ENCODE measurements at regions of chr10 and their contacts with region 1.

Region 1: GRCh38 chr10:3043512-3044368 is 23.6 kb upstream of the PFKP start:
- DNase-seq: peak; percentile 74
- ATAC-seq: peak; percentile 87
- H3K4me3 ChIP-seq: no peak overlapping the region
- H3K27ac ChIP-seq: no peak overlapping the region
- H3K4me1 ChIP-seq: peaks cover 11 to 24% of the 10 kb centered on the region in 2 experiments
- H3K27me3 ChIP-seq: no peaks in the 10 kb centered on the region
- CTCF ChIP-seq: peak; percentile 75 to 88 (median 84)
- POLR2A ChIP-seq: no peak
- RAD21 ChIP-seq: peak; percentile 93

Region 2: DNA sequence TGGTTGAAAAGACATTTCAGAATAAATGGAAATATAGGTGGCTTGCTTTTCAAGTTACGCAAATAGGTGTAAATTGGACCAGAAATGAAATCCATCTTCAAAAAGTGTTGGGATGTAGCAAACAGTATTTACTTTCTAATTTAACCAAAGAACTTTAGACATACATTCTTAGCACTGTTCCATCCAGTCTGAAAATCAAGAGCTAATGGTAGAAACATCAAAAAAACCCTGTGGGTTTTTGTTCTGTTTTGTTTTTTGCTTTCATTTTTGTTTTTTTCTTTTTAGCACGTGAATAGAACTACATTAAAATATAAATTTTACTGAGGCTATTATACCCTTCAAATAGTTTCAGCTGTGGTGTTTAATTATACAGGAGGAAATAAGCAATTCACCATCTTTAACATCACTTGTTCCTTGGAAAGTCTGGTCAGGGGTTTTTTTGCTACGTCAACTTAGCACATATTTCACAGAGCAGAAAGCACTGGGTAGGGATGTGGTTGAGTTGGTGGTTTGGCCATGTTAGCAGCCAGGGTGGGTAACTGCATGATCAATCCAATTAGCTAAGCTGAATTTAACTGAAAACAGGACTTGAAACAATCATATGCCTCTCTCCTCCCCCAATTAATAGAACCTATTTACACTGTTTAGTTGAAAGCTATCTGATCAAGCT is 251.8 kb before region 1 on chr10:
- CTCF ChIA-PET with region 1: no interaction called
- POLR2A ChIA-PET with region 1: no interaction called
- RAD21 ChIA-PET with region 1: no interaction called
- intact Hi-C with region 1: no loop called
- DNase-seq: no peak
- ATAC-seq: no peak
- H3K4me3 ChIP-seq: no peak overlapping the region
- H3K27ac ChIP-seq: no peak overlapping the region
- H3K4me1 ChIP-seq: no peaks in the 10 kb centered on the region
- H3K27me3 ChIP-seq: no peaks in the 10 kb centered on the region
- CTCF ChIP-seq: no peak
- POLR2A ChIP-seq: no peak
- RAD21 ChIP-seq: no peak

Region 3: GRCh38 chr10:2839081-2839725 is 204.5 kb before region 1 on chr10:
- CTCF ChIA-PET with region 1: interaction called, 3 read pairs
- POLR2A ChIA-PET with region 1: no interaction called
- RAD21 ChIA-PET with region 1: interaction called, 3 to 4 read pairs
- intact Hi-C with region 1: loop called (anchors 1 kb)
- DNase-seq: no peak
- ATAC-seq: peak; percentile 93
- H3K4me3 ChIP-seq: no peak overlapping the region
- H3K27ac ChIP-seq: no peak overlapping the region
- H3K4me1 ChIP-seq: no peaks in the 10 kb centered on the region
- H3K27me3 ChIP-seq: peaks cover 29% of the 10 kb centered on the region; the same call in 1 of the 2 replicates
- CTCF ChIP-seq: peak; percentile 60 to 83 (median 80); a peak in 5 of 6 replicates
- POLR2A ChIP-seq: no peak
- RAD21 ChIP-seq: peak; percentile 58

Region 4: DNA sequence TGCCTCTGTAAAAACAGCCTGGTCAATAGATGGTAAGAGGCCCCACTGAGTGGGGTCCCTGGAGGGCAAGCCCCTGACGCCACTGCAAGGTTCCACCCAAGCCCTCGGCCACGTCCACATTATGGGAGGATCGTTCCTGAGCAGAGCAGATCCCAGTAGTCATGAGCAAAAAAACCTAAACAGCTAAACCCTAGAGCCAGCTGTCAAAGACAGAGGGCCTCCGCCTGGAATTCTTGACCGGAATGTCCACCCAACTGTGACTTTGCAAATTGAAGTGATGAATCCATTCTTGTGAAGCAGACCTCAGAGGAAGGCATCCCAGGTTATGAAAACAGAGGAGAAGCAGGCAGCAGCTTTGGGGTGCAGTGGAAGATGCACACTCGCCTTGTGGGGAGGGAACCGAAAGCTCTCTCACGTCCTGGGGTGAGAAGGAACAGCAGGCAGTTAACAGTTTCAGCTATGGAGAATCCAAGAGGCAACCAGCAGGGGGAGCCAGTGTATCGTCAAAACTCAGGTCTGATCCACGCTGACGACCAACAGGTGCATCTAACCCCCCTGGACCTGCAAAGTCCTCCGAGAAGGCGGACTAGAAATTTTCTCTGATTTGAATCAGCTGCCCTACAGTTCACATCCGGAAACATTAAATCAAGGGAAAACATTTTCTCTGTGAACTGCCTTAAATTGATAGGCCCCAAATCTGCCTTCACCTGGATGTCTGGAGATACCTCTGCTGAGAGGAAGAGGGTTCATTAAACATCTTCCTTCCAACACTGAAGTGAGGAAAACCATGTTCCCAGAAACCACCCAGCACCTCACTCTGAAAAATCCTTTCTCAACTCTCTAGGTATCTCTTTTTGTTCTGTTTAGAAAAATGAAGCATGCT is 115.5 kb before region 1 on chr10:
- CTCF ChIA-PET with region 1: interaction called, 68 read pairs
- POLR2A ChIA-PET with region 1: interaction called, 3 read pairs
- RAD21 ChIA-PET with region 1: interaction called in 1 of 2 experiments, 8 read pairs
- intact Hi-C with region 1: loop called (anchors 1 kb)
- DNase-seq: peak; percentile 51
- ATAC-seq: peak; percentile 95
- H3K4me3 ChIP-seq: peak overlapping the region; percentile 7 to 17; a peak in 2 of 4 replicates
- H3K27ac ChIP-seq: no peak overlapping the region
- H3K4me1 ChIP-seq: 0 out of 4 replicates have a peak, but pooled peaks cover 0 to 3% of the 10 kb centered on the region in 2 experiments
- H3K27me3 ChIP-seq: peaks cover 31% of the 10 kb centered on the region
- CTCF ChIP-seq: peak; percentile 58 to 85 (median 82); a peak in 5 of 6 replicates
- POLR2A ChIP-seq: no peak
- RAD21 ChIP-seq: peak; percentile 86

Region 5: GRCh38 chr10:2985729-2986232 is 58.0 kb before region 1 on chr10:
- CTCF ChIA-PET with region 1: interaction called, 15 read pairs
- POLR2A ChIA-PET with region 1: no interaction called
- RAD21 ChIA-PET with region 1: no interaction called
- intact Hi-C with region 1: no loop called
- DNase-seq: peak; percentile 73
- ATAC-seq: peak; percentile 96
- H3K4me3 ChIP-seq: peak overlapping the region; percentile 41 to 63
- H3K27ac ChIP-seq: peak overlapping the region; percentile 45
- H3K4me1 ChIP-seq: peaks cover 16 to 32% of the 10 kb centered on the region in 2 experiments
- H3K27me3 ChIP-seq: no peaks in the 10 kb centered on the region
- CTCF ChIP-seq: 0 out of 6 replicates have a peak, but pooled peaks of 1 of the 3 experiments have one; percentile 23
- POLR2A ChIP-seq: peak; percentile 41
- RAD21 ChIP-seq: no peak

Region 6: GRCh38 chr10:3162533-3162932 is 118.8 kb after region 1 on chr10:
- CTCF ChIA-PET with region 1: no interaction called
- POLR2A ChIA-PET with region 1: no interaction called
- RAD21 ChIA-PET with region 1: no interaction called
- intact Hi-C with region 1: no loop called
- DNase-seq: no peak
- ATAC-seq: peak; percentile 89
- H3K4me3 ChIP-seq: no peak overlapping the region
- H3K27ac ChIP-seq: no peak overlapping the region
- H3K4me1 ChIP-seq: no peaks in the 10 kb centered on the region
- H3K27me3 ChIP-seq: no peaks in the 10 kb centered on the region
- CTCF ChIP-seq: peak in 2 of 3 experiments; percentile 39 to 50; a peak in 4 of 6 replicates
- POLR2A ChIP-seq: no peak
- RAD21 ChIP-seq: no peak

Measured in HCT116 (cell line).